Ovary (tissue), 10 donors: ENCODE measurements at regions of chr3 and their contacts with region 1.

Region 1: GRCh38 chr3:102471001-102471400 is 36.2 kb downstream of the ZPLD1 start:
- DNase-seq: no peak
- H3K4me3 ChIP-seq: no peak overlapping the region
- H3K27ac ChIP-seq: no peak overlapping the region
- H3K4me1 ChIP-seq: no peaks in the 10 kb centered on the region
- H3K27me3 ChIP-seq: no peaks in the 10 kb centered on the region
- CTCF ChIP-seq: no peak
- EP300 ChIP-seq: no peak
- POLR2A ChIP-seq: no peak

Region 2: DNA sequence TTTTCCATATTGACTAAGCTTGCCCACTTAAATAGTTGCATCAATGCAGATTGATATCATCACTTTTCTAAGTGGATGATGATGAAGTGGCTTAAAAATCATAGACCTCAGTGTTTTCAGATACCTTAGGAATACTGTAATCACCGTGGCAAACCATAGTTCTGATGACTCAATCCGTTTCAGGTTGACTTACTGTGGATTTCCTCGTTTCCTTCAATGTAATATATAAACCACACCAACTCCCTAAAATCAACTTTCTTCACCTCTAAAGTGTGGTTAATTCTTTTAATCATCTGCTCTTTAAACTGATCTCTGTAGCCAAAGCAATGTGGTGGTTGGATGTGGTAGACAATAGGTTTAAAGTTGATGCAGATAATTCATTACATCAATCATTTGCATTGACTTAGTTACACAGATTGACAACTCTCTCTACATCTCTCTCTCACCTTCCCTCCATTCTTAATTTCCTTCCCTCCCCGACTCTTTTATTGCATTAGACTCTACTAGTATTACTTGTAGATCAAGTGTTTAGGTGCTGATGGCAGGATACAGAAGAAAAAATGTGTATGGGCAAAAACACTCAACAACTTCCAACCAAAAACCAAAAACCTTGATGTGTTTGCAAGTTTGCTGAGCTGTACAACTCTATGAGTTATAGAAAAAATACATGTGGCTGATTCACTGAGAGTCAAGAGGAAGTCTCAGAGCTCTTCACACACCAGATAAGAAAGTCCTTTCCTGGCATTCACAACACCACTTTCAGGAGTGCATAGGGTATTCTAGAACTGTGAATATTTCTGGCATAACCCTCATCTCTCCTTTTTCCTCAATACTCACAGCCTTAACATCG is 378.2 kb before region 1 on chr3:
- intact Hi-C with region 1: no loop called
- DNase-seq: no peak
- H3K4me3 ChIP-seq: no peak overlapping the region
- H3K27ac ChIP-seq: no peak overlapping the region
- H3K4me1 ChIP-seq: no peaks in the 10 kb centered on the region
- H3K27me3 ChIP-seq: no peaks in the 10 kb centered on the region
- CTCF ChIP-seq: no peak
- EP300 ChIP-seq: no peak
- POLR2A ChIP-seq: no peak

Region 3: GRCh38 chr3:103653996-103654395 is 1183.0 kb after region 1 on chr3:
- intact Hi-C with region 1: loop called in 1 of 4 experiments (anchors 5 kb)
- DNase-seq: no peak
- H3K4me3 ChIP-seq: no peak overlapping the region
- H3K27ac ChIP-seq: no peak overlapping the region
- H3K4me1 ChIP-seq: no peaks in the 10 kb centered on the region
- H3K27me3 ChIP-seq: no peaks in the 10 kb centered on the region
- CTCF ChIP-seq: no peak
- EP300 ChIP-seq: no peak
- POLR2A ChIP-seq: no peak